Caco-2 (cell line): ENCODE measurements at regions of chr6 and their contacts with region 1.

Region 1: DNA sequence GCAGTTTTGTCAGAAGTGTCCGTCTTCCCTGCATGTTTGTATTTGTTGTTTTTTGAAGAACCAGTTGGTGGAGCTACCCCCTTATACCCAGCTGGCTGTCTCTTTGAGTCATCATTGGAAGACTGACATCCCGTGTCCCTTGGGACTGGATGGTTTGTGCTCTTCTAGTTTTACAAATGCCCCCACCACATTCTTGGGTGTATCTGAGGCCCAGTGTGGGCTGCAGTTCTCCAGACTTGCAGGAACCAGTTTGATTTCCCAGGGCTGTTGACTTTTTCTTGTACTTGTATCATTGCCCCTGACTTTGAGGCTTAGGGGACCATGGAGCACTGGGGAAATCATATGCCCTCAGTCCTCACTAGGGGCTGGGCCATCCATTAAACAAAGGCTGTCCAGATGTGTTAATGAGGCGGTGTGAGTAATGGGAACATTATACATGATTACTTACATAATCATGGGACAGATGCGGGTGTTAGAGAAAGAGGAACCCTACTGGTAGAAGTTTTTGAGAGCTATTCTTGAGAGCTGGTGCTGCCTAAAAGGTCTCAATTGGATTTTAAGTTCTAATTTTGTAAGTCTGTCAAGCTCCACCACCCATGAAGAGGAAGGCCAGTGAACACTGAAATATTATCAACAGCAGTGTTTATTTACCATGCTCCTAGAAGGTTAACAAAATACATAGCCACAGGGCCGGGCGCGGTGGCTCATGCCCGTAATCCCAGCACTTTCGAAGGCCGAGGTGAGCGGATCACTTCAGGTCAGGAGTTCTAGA is 8.4 kb downstream of the JARID2 start:
- DNase-seq: peak in 1 of 2 experiments; percentile 29
- H3K4me3 ChIP-seq: no peak overlapping the region
- H3K4me3 Mint-ChIP-seq: no peak overlapping the region
- H3K27ac Mint-ChIP-seq: no peak overlapping the region
- H3K4me1 ChIP-seq: peaks cover 8% of the 10 kb centered on the region
- H3K4me1 Mint-ChIP-seq: peaks cover 16% of the 10 kb centered on the region
- H3K27me3 ChIP-seq: no peaks in the 10 kb centered on the region
- H3K27me3 Mint-ChIP-seq: no peaks in the 10 kb centered on the region
- CTCF ChIP-seq: no peak

Region 2: GRCh38 chr6:15389765-15390723 is 135.8 kb after region 1 on chr6:
- CTCF ChIA-PET with region 1: interaction called, 4 read pairs
- POLR2A ChIA-PET with region 1: no interaction called
- intact Hi-C with region 1: loop called (anchors 1 kb)
- DNase-seq: peak in 1 of 2 experiments; percentile 52
- H3K4me3 ChIP-seq: no peak overlapping the region
- H3K4me3 Mint-ChIP-seq: no peak overlapping the region
- H3K27ac Mint-ChIP-seq: peak overlapping the region; percentile 46
- H3K4me1 ChIP-seq: no peaks in the 10 kb centered on the region; the same call in 1 of the 2 replicates
- H3K4me1 Mint-ChIP-seq: peaks cover 4% of the 10 kb centered on the region
- H3K27me3 ChIP-seq: no peaks in the 10 kb centered on the region
- H3K27me3 Mint-ChIP-seq: no peaks in the 10 kb centered on the region
- CTCF ChIP-seq: peak; percentile 65 to 80

Region 3: DNA sequence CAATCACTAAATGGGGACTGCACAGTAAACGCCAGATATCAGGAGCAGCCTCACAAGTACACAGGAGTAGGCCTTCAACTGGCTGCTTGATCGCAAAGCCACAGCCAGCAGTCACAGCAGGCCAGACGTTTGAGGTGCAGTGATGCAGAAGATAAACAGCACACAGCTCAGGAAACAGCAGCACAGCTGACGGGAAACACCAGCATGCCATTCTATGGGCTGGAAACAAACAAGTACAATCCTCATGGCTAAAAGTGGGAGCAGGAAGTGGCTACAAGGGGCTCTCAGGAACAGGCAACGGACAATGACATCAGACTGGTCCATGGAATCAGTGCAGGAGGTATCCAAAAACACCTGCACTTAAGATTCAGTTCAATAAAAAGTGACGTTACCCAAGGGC is 297.5 kb after region 1 on chr6:
- CTCF ChIA-PET with region 1: no interaction called
- POLR2A ChIA-PET with region 1: no interaction called
- intact Hi-C with region 1: no loop called
- DNase-seq: no peak
- H3K4me3 ChIP-seq: no peak overlapping the region
- H3K4me3 Mint-ChIP-seq: no peak overlapping the region
- H3K27ac Mint-ChIP-seq: no peak overlapping the region
- H3K4me1 ChIP-seq: peaks cover 16% of the 10 kb centered on the region
- H3K4me1 Mint-ChIP-seq: peaks cover 25% of the 10 kb centered on the region
- H3K27me3 ChIP-seq: no peaks in the 10 kb centered on the region
- H3K27me3 Mint-ChIP-seq: no peaks in the 10 kb centered on the region
- CTCF ChIP-seq: no peak